Naive thymus-derived CD4-positive, alpha-beta T cell (primary cell): ENCODE measurements at regions of chrX and their contacts with region 1.

Region 1: GRCh38 chrX:119235872-119236622 is at the start of gene PGRMC1:
- DNase-seq: peak; percentile 60 to 84 (median 79)
- ATAC-seq: peak; percentile 98
- H3K4me3 ChIP-seq: peak within 1 kb of the TSS; percentile 68
- H3K4me3 Mint-ChIP-seq: peak within 1 kb of the TSS; percentile 83 to 93 (median 90)
- H3K27ac ChIP-seq: peak within 1 kb of the TSS; percentile 74
- H3K27ac Mint-ChIP-seq: peak within 1 kb of the TSS; percentile 49 to 88 (median 79)
- H3K4me1 ChIP-seq: peaks cover 8 to 11% of the 10 kb centered on the region in 2 donors
- H3K4me1 Mint-ChIP-seq: peaks cover 13 to 36% (median 31%) of the 10 kb centered on the region in 7 donors
- H3K27me3 ChIP-seq: no peaks in the 10 kb centered on the region
- H3K27me3 Mint-ChIP-seq: peaks cover 0 to 29% (median 0%) of the 10 kb centered on the region in 5 donors
- total RNA-seq, gene PGRMC1: 9.5 to 28.4 (median 11.9) TPM

Region 2: GRCh38 chrX:118345401-118346257 is 890.4 kb before region 1 on chrX and contains the start of gene WDR44:
- CTCF ChIA-PET with region 1: no interaction called
- POLR2A ChIA-PET with region 1: no interaction called
- intact Hi-C with region 1: loop called (anchors 1 to 5 kb)
- DNase-seq: peak; percentile 79 to 95 (median 92)
- ATAC-seq: peak; percentile 95
- H3K4me3 ChIP-seq: peak within 1 kb of the TSS; percentile 87
- H3K4me3 Mint-ChIP-seq: peak within 1 kb of the TSS; percentile 87 to 99 (median 98)
- H3K27ac ChIP-seq: peak within 1 kb of the TSS; percentile 93
- H3K27ac Mint-ChIP-seq: peak within 1 kb of the TSS; percentile 92 to 99 (median 96)
- H3K4me1 ChIP-seq: peaks cover 19 to 24% of the 10 kb centered on the region in 2 donors
- H3K4me1 Mint-ChIP-seq: peaks cover 5 to 40% (median 36%) of the 10 kb centered on the region in 7 donors
- H3K27me3 ChIP-seq: no peaks in the 10 kb centered on the region
- H3K27me3 Mint-ChIP-seq: no peaks in the 10 kb centered on the region
- total RNA-seq, gene WDR44: 12.0 to 19.0 (median 17.0) TPM

Region 3: GRCh38 chrX:118943102-118943501 is 292.9 kb before region 1 on chrX:
- CTCF ChIA-PET with region 1: no interaction called
- POLR2A ChIA-PET with region 1: no interaction called
- intact Hi-C with region 1: no loop called
- DNase-seq: no peak
- ATAC-seq: no peak
- H3K4me3 ChIP-seq: no peak overlapping the region
- H3K4me3 Mint-ChIP-seq: no peak overlapping the region
- H3K27ac ChIP-seq: no peak overlapping the region
- H3K27ac Mint-ChIP-seq: no peak overlapping the region
- H3K4me1 ChIP-seq: no peaks in the 10 kb centered on the region
- H3K4me1 Mint-ChIP-seq: no peaks in the 10 kb centered on the region
- H3K27me3 ChIP-seq: no peaks in the 10 kb centered on the region
- H3K27me3 Mint-ChIP-seq: peaks cover 0 to 7% (median 0%) of the 10 kb centered on the region in 5 donors

Region 4: GRCh38 chrX:118974088-118974907 is 261.7 kb before region 1 on chrX and contains the start of gene LONRF3:
- CTCF ChIA-PET with region 1: no interaction called
- POLR2A ChIA-PET with region 1: no interaction called
- intact Hi-C with region 1: loop called in 1 of 2 experiments (anchors 2 kb)
- DNase-seq: peak; percentile 26 to 71 (median 56)
- ATAC-seq: peak; percentile 65
- H3K4me3 ChIP-seq: peak within 1 kb of the TSS; percentile 64
- H3K4me3 Mint-ChIP-seq: peak within 1 kb of the TSS; percentile 86 to 100 (median 92)
- H3K27ac ChIP-seq: peak within 1 kb of the TSS; percentile 74
- H3K27ac Mint-ChIP-seq: peak within 1 kb of the TSS; percentile 38 to 94 (median 90)
- H3K4me1 ChIP-seq: peaks cover 0 to 3% of the 10 kb centered on the region in 2 donors
- H3K4me1 Mint-ChIP-seq: peaks cover 0 to 24% (median 17%) of the 10 kb centered on the region in 7 donors
- H3K27me3 ChIP-seq: no peaks in the 10 kb centered on the region
- H3K27me3 Mint-ChIP-seq: peaks cover 0 to 57% (median 5%) of the 10 kb centered on the region in 5 donors
- total RNA-seq, gene LONRF3: 0.07 to 17.8 (median 11.5) TPM

Region 5: GRCh38 chrX:119194621-119195020 is 41.4 kb before region 1 on chrX:
- CTCF ChIA-PET with region 1: no interaction called
- POLR2A ChIA-PET with region 1: no interaction called
- intact Hi-C with region 1: no loop called
- DNase-seq: no peak
- ATAC-seq: no peak
- H3K4me3 ChIP-seq: no peak overlapping the region
- H3K4me3 Mint-ChIP-seq: no peak overlapping the region
- H3K27ac ChIP-seq: no peak overlapping the region
- H3K27ac Mint-ChIP-seq: no peak overlapping the region
- H3K4me1 ChIP-seq: no peaks in the 10 kb centered on the region
- H3K4me1 Mint-ChIP-seq: peaks cover 0 to under 1% (median 0%) of the 10 kb centered on the region in 7 donors
- H3K27me3 ChIP-seq: no peaks in the 10 kb centered on the region
- H3K27me3 Mint-ChIP-seq: peaks cover 0 to 3% (median 0%) of the 10 kb centered on the region in 5 donors

Region 6: DNA sequence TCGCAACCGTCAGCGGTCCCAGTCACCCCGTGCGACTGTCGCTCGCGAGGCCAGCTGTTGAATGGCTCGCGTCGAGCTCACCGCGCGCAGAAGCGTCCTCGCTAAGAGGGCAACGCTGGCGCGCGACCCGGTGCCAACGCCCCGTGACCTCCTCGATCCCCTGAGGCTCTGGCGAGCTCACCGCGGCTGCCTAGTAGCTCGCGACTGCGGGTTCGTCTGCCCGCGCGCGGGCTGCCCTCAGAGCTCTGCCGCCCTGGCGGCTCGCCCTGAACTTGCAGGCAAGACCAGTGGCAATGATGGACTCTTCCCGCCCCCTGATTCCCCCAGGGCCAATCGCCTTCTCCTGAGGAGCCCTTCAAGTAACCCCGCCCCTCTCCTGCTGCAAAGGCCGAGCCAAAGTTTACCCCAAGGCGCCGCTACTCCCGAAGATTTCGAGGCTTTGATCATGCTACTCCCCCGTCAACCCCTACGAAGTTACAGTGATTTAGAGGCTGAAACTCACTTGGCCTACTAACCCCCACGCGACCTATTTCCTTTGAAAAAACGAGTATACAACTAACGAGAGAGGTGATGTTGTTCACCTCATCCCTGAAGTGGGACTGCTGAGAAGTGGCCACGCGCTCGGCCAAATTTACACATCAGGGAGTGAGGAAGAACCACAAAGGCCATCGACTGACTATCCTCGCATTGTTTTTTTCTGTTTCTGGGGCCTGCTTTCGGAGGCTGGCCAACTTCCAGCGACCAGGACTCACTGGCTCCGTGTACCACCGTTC is 37.6 kb after region 1 on chrX:
- CTCF ChIA-PET with region 1: no interaction called
- POLR2A ChIA-PET with region 1: interaction called, 3 read pairs
- intact Hi-C with region 1: loop called in 1 of 2 experiments (anchors 2 kb)
- DNase-seq: peak; percentile 5 to 38 (median 26)
- ATAC-seq: peak; percentile 86
- H3K4me3 ChIP-seq: peak overlapping the region; percentile 23
- H3K4me3 Mint-ChIP-seq: peak overlapping the region; percentile 39 to 83 (median 78)
- H3K27ac ChIP-seq: no peak overlapping the region
- H3K27ac Mint-ChIP-seq: no peak overlapping the region
- H3K4me1 ChIP-seq: no peaks in the 10 kb centered on the region
- H3K4me1 Mint-ChIP-seq: peaks cover 0 to 10% (median 7%) of the 10 kb centered on the region in 7 donors
- H3K27me3 ChIP-seq: no peaks in the 10 kb centered on the region
- H3K27me3 Mint-ChIP-seq: peaks cover 0 to 23% (median 7%) of the 10 kb centered on the region in 5 donors

Region 7: GRCh38 chrX:119374736-119375135 is 138.7 kb after region 1 on chrX:
- CTCF ChIA-PET with region 1: no interaction called
- POLR2A ChIA-PET with region 1: no interaction called
- intact Hi-C with region 1: no loop called
- DNase-seq: no peak
- ATAC-seq: no peak
- H3K4me3 ChIP-seq: no peak overlapping the region
- H3K4me3 Mint-ChIP-seq: no peak overlapping the region
- H3K27ac ChIP-seq: no peak overlapping the region
- H3K27ac Mint-ChIP-seq: no peak overlapping the region
- H3K4me1 ChIP-seq: no peaks in the 10 kb centered on the region
- H3K4me1 Mint-ChIP-seq: peaks cover 0 to 3% (median 0%) of the 10 kb centered on the region in 7 donors
- H3K27me3 ChIP-seq: no peaks in the 10 kb centered on the region
- H3K27me3 Mint-ChIP-seq: peaks cover 0 to 14% (median 7%) of the 10 kb centered on the region in 5 donors

Region 8: GRCh38 chrX:119398974-119399771 is 163.1 kb after region 1 on chrX and contains the start of gene SLC25A43:
- CTCF ChIA-PET with region 1: no interaction called
- POLR2A ChIA-PET with region 1: no interaction called
- intact Hi-C with region 1: loop called in 1 of 2 experiments (anchors 1 kb)
- DNase-seq: peak; percentile 6 to 49 (median 15)
- ATAC-seq: peak; percentile 85
- H3K4me3 ChIP-seq: peak within 1 kb of the TSS; percentile 34
- H3K4me3 Mint-ChIP-seq: peak within 1 kb of the TSS; percentile 74 to 95 (median 88)
- H3K27ac ChIP-seq: peak within 1 kb of the TSS; percentile 62
- H3K27ac Mint-ChIP-seq: peak within 1 kb of the TSS; percentile 47 to 96 (median 79)
- H3K4me1 ChIP-seq: no peaks in the 10 kb centered on the region
- H3K4me1 Mint-ChIP-seq: peaks cover 0 to 26% (median 10%) of the 10 kb centered on the region in 7 donors
- H3K27me3 ChIP-seq: no peaks in the 10 kb centered on the region
- H3K27me3 Mint-ChIP-seq: peaks cover 0 to 6% (median 0%) of the 10 kb centered on the region in 5 donors
- total RNA-seq, gene SLC25A43: 1.8 to 8.2 (median 2.6) TPM

Region 9: DNA sequence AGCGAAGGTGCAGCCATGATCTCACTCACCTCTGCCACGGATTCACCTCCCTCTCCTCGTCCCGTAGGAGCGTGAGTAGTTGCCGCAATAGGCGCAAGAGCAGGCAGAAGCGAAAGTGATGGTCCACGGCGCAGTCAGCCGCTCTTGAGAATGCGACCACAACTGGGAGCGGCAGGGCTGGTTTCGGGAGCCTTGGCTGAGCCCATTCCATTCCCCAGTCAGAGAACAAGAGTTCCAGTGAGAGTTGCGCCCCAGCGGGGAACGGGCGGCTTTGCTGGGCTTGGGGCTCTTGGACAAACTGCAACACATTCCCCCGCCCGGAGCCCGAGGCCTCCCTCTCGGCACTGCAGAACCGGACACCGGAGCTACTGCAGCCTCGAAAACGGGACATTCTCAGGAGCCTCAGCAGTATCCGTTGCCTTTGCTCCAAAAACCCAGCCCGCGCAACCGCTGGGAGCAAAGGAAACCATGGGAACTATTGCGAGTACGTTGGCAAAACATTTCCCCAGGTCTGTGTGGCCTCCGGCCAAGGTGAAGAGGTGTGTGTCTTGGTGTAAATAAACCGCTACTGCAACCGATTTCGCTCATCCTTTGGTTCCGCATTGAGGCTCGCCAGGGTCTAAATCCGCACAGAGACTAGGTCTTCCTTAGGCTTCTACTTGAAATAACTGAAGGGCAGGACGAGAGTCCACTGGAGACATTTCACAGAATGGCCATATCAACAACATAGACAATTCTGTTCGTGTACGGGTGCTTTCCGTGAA is 1008.9 kb after region 1 on chrX:
- CTCF ChIA-PET with region 1: no interaction called
- POLR2A ChIA-PET with region 1: no interaction called
- intact Hi-C with region 1: no loop called
- DNase-seq: peak; percentile 22 to 68 (median 52)
- ATAC-seq: peak; percentile 92
- H3K4me3 ChIP-seq: peak overlapping the region; percentile 73
- H3K4me3 Mint-ChIP-seq: peak overlapping the region; percentile 85 to 100 (median 96)
- H3K27ac ChIP-seq: peak overlapping the region; percentile 77
- H3K27ac Mint-ChIP-seq: peak overlapping the region; percentile 78 to 97 (median 90)
- H3K4me1 ChIP-seq: peaks cover 5 to 6% of the 10 kb centered on the region in 2 donors
- H3K4me1 Mint-ChIP-seq: peaks cover 12 to 32% (median 27%) of the 10 kb centered on the region in 7 donors
- H3K27me3 ChIP-seq: no peaks in the 10 kb centered on the region
- H3K27me3 Mint-ChIP-seq: peaks cover 0 to 4% (median 0%) of the 10 kb centered on the region in 5 donors